ENCODE measurements at regions of chr13 and their contacts with region 1.

Region 1: GRCh38 chr13:52194184-52194868 is 34.9 kb upstream of the NEK3 start:
- DNase-seq: peak; percentile 84 to 88 (median 85)
- H3K4me3 ChIP-seq: peak overlapping the region; percentile 82 to 94
- H3K4me3 Mint-ChIP-seq: peak overlapping the region; percentile 96 to 99 (median 98)
- H3K27ac ChIP-seq: peak overlapping the region; percentile 68
- H3K27ac Mint-ChIP-seq: peak overlapping the region; percentile 94 to 99 (median 97)
- H3K4me1 ChIP-seq: peaks cover 27% of the 10 kb centered on the region
- H3K4me1 Mint-ChIP-seq: peaks cover 23 to 41% (median 35%) of the 10 kb centered on the region in 4 donors
- H3K27me3 ChIP-seq: no peaks in the 10 kb centered on the region
- H3K27me3 Mint-ChIP-seq: no peaks in the 10 kb centered on the region

Region 2: DNA sequence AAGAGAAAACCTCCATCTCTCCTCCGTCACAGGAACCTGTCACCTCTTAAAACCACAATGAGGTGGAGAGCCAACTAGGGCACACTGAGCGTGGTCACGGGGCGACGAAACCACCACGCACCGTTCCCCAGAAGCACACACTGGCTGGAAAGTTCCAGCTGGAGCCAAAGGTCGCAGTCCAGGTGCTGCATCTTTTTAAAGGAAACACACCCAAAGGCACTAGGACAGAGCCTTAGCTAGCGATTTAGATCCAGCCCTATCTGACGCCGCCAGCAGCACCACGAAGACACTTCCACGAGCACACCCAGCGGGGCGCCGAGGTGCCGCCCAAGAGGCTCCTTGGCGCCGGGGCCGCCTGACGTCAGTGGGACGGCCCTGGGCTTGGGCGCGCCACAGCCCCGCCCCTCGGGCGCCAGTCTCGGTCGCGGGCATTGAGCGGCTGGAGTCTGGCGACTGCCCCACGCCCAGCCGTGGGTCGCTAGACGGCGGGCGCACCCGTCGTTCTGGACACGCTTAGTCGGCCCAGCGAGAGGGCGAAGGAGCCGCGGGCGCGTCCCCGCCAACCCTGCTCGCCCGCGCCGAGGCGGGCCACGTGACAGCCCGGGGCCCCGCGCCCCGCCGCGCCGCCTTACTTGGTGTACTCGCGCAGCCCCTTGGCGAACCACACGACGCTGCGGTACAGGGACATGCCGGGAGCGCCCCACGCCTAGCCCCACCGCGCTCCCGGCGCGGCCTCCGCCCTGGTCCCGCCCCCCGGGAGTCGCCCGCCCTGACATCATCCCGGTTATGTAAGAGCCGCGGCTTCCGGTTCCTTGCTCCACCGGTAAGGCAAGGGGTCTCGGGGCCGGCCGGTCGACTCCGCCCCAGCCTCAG is 390.7 kb before region 1 on chr13 and contains the start of gene DHRS12:
- CTCF ChIA-PET with region 1: no interaction called
- POLR2A ChIA-PET with region 1: interaction called, 6 read pairs
- intact Hi-C with region 1: loop called (anchors 2 kb)
- DNase-seq: peak; percentile 92 to 96 (median 95)
- H3K4me3 ChIP-seq: peak within 1 kb of the TSS; percentile 76 to 88
- H3K4me3 Mint-ChIP-seq: peak within 1 kb of the TSS; percentile 91 to 98 (median 96)
- H3K27ac ChIP-seq: peak within 1 kb of the TSS; percentile 96
- H3K27ac Mint-ChIP-seq: peak within 1 kb of the TSS; percentile 98 to 100 (median 100)
- H3K4me1 ChIP-seq: peaks cover 45% of the 10 kb centered on the region
- H3K4me1 Mint-ChIP-seq: peaks cover 34 to 59% (median 47%) of the 10 kb centered on the region in 4 donors
- H3K27me3 ChIP-seq: no peaks in the 10 kb centered on the region
- H3K27me3 Mint-ChIP-seq: no peaks in the 10 kb centered on the region
- total RNA-seq, gene DHRS12: 23.6 to 24.3 TPM

Region 3: DNA sequence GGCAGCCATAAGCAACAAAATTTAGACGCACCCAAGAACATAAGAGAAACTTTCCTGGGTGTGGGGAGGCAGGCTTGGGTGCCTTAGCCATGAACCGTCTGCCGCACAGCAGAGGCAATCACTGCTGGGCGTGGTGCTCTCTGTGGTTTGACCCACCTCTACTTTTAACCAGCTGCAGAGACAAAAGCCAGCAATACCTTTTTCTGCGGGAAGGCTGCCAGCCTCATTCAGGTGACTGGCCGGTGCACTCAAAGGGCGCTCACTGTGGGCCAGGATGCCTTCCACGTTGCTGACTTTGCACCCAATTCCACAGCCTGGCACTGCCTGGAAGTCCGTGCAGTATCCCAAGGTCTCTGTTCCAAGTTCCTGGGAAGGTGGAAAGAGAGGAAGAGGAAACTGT is 252.1 kb before region 1 on chr13:
- CTCF ChIA-PET with region 1: no interaction called
- POLR2A ChIA-PET with region 1: no interaction called
- intact Hi-C with region 1: no loop called
- DNase-seq: peak; percentile 51 to 64 (median 57)
- H3K4me3 ChIP-seq: peak overlapping the region; percentile 27 to 45
- H3K4me3 Mint-ChIP-seq: peak overlapping the region; percentile 87 to 92 (median 90)
- H3K27ac ChIP-seq: peak overlapping the region; percentile 22
- H3K27ac Mint-ChIP-seq: peak overlapping the region; percentile 77 to 92 (median 88)
- H3K4me1 ChIP-seq: peaks cover 53% of the 10 kb centered on the region
- H3K4me1 Mint-ChIP-seq: peaks cover 43 to 63% (median 56%) of the 10 kb centered on the region in 4 donors
- H3K27me3 ChIP-seq: no peaks in the 10 kb centered on the region
- H3K27me3 Mint-ChIP-seq: peaks cover 0 to 4% of the 10 kb centered on the region in 2 donors

Region 4: DNA sequence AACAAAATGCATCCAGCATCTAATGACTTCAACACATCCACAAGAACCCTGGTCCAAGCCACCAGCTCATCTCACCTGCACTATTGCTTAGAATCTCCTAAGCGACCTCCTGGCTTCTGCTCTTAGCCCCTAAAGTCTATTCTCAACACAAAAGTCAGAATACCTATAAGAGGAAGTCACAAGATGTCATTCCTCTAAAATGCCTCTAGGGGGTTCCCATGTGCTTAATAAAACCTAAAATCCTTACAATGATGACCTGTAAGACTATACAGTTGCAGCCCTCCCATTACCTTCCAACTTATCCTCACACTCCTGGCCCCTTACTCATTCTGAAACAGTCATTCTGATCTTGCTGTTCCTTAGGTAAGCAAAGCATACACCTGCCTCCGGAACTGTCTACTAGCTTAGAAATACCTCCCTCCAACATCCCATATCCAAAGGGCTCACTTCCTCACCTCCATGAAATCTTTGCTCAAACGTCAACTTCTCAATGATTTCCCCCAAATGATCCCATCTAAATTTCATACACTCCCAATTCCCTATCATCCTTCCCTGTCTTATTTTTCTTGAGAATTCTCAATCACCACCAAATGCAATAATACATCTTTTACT is 193.1 kb before region 1 on chr13:
- CTCF ChIA-PET with region 1: interaction called, 10 read pairs
- POLR2A ChIA-PET with region 1: no interaction called
- intact Hi-C with region 1: no loop called
- DNase-seq: peak in 4 of 5 donors; percentile 41 to 48 (median 43)
- H3K4me3 ChIP-seq: no peak overlapping the region
- H3K4me3 Mint-ChIP-seq: no peak overlapping the region
- H3K27ac ChIP-seq: no peak overlapping the region
- H3K27ac Mint-ChIP-seq: peak overlapping the region in 1 of 7 donors; percentile 56
- H3K4me1 ChIP-seq: no peaks in the 10 kb centered on the region
- H3K4me1 Mint-ChIP-seq: peaks cover 0 to 2% (median under 1%) of the 10 kb centered on the region in 4 donors
- H3K27me3 ChIP-seq: peaks cover 5% of the 10 kb centered on the region
- H3K27me3 Mint-ChIP-seq: peaks cover 4 to 7% of the 10 kb centered on the region in 2 donors

Region 5: GRCh38 chr13:52159321-52160086 is 34.8 kb before region 1 on chr13 and contains the start of gene NEK3:
- CTCF ChIA-PET with region 1: interaction called, 8 read pairs
- POLR2A ChIA-PET with region 1: interaction called, 17 read pairs
- intact Hi-C with region 1: loop called (anchors 1 kb)
- DNase-seq: peak; percentile 53 to 65 (median 59)
- H3K4me3 ChIP-seq: peak within 1 kb of the TSS; percentile 55 to 70
- H3K4me3 Mint-ChIP-seq: peak within 1 kb of the TSS; percentile 89 to 95 (median 93)
- H3K27ac ChIP-seq: peak within 1 kb of the TSS; percentile 40
- H3K27ac Mint-ChIP-seq: peak within 1 kb of the TSS; percentile 73 to 95 (median 86)
- H3K4me1 ChIP-seq: peaks cover 15% of the 10 kb centered on the region
- H3K4me1 Mint-ChIP-seq: peaks cover 27 to 46% (median 32%) of the 10 kb centered on the region in 4 donors
- H3K27me3 ChIP-seq: no peaks in the 10 kb centered on the region
- H3K27me3 Mint-ChIP-seq: no peaks in the 10 kb centered on the region
- total RNA-seq, gene NEK3: 6.4 to 8.2 TPM

Region 6: GRCh38 chr13:52428295-52428694 is 234.0 kb after region 1 on chr13:
- CTCF ChIA-PET with region 1: no interaction called
- POLR2A ChIA-PET with region 1: no interaction called
- intact Hi-C with region 1: no loop called
- DNase-seq: no peak
- H3K4me3 ChIP-seq: no peak overlapping the region
- H3K4me3 Mint-ChIP-seq: no peak overlapping the region
- H3K27ac ChIP-seq: no peak overlapping the region
- H3K27ac Mint-ChIP-seq: no peak overlapping the region
- H3K4me1 ChIP-seq: no peaks in the 10 kb centered on the region
- H3K4me1 Mint-ChIP-seq: peaks cover 0 to 8% (median 1%) of the 10 kb centered on the region in 4 donors
- H3K27me3 ChIP-seq: no peaks in the 10 kb centered on the region
- H3K27me3 Mint-ChIP-seq: no peaks in the 10 kb centered on the region

Region 7: DNA sequence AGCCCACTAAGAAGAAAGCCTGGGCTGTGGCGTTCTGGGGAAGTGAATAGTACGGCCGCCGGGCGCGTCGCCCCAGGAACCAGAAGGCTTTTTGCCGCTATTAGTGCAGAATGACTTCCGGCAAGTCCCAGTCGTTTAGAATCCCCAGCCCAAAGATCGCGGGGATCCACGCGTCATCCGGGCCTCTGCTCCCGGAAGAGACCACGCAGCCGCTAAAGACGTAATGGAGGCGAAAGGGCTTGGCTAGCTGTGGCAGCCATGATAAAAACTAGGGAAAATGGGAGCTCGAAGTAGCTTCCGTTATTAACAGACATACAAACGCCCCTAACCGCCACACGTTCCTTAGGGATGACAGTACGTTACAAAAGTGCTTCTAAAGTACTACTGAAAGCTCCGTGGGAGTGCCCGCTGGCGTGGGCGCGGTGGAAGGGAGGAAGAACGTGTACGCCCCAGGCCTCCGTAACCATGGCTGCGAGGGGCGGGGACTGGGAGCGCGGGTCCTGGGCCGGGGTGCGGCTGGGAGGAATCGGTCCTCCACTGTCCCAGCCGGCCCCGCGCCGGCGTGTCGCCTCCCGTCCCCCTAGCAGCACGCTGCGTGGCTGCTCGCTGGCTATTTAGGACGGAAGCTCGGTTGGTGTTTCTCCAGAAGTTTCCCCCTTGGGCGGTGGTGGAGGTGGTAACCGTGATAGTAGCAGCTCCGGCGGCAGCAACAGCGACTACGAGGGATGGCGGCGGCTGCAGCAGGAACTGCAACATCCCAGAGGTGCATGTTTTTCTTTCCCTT is 458.1 kb after region 1 on chr13 and contains the start of gene SUGT1:
- CTCF ChIA-PET with region 1: no interaction called
- POLR2A ChIA-PET with region 1: interaction called, 8 read pairs
- intact Hi-C with region 1: loop called (anchors 1 kb)
- DNase-seq: peak; percentile 96 to 98 (median 97)
- H3K4me3 ChIP-seq: peak within 1 kb of the TSS; percentile 61 to 94
- H3K4me3 Mint-ChIP-seq: no peak within 1 kb of the TSS
- H3K27ac ChIP-seq: peak within 1 kb of the TSS; percentile 96
- H3K27ac Mint-ChIP-seq: no peak within 1 kb of the TSS
- H3K4me1 ChIP-seq: peaks cover 46% of the 10 kb centered on the region
- H3K4me1 Mint-ChIP-seq: peaks cover 8 to 16% (median 13%) of the 10 kb centered on the region in 4 donors
- H3K27me3 ChIP-seq: no peaks in the 10 kb centered on the region
- H3K27me3 Mint-ChIP-seq: no peaks in the 10 kb centered on the region
- total RNA-seq, gene SUGT1: 40.4 to 42.5 TPM

Measured in CD4-positive, alpha-beta memory T cell (primary cell).